Ascending aorta (tissue), 2 donors: ENCODE measurements at regions of chr22 and their contacts with region 1.

Region 1: DNA sequence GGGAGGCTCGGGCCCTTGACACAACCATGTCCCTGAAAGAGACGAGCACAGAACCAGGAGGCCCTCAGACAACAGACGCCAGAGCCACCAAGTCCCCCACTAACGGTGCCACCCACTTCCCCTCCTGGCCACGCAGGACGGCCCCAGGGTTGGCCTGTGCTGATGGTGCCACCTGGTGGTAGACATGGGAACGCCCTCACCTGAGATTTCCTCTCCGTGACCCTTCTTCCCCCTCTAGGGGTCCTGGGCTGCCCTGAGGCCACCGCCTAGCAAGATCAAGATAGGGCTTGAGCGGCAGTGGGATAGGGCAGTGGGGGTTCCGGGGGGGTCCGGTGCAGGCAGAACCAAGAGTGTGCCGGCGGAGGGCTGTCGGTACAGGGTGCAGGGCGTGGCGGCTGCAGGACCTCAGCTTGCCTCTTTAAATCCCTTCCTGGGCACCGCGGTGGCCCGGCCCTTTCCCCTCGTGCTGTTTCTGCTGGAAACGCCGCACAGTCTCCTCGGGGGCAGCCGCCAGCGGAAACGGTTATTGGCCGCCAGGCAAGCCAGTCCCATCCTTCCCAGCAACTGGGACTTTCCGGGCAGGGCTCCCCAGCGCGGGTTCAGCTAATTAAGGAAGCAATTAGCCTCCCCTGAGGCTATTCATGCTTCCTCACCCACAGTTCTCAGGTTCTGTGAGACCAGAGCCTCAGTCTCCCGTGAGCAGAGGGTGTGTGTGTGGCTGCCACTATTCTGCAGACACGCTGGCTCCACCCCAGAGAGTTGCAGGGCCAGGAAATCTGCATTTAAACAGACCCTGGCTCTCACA is 5.5 kb upstream of the NFAM1 start:
- DNase-seq: peak in 1 of 2 donors; percentile 86
- H3K4me3 ChIP-seq: peak overlapping the region; percentile 43 to 52
- H3K27ac ChIP-seq: no peak overlapping the region
- H3K4me1 ChIP-seq: peaks cover 0 to 11% of the 10 kb centered on the region in 2 donors
- H3K27me3 ChIP-seq: no peaks in the 10 kb centered on the region
- CTCF ChIP-seq: peak; percentile 96 to 98 (median 96)

Region 2: DNA sequence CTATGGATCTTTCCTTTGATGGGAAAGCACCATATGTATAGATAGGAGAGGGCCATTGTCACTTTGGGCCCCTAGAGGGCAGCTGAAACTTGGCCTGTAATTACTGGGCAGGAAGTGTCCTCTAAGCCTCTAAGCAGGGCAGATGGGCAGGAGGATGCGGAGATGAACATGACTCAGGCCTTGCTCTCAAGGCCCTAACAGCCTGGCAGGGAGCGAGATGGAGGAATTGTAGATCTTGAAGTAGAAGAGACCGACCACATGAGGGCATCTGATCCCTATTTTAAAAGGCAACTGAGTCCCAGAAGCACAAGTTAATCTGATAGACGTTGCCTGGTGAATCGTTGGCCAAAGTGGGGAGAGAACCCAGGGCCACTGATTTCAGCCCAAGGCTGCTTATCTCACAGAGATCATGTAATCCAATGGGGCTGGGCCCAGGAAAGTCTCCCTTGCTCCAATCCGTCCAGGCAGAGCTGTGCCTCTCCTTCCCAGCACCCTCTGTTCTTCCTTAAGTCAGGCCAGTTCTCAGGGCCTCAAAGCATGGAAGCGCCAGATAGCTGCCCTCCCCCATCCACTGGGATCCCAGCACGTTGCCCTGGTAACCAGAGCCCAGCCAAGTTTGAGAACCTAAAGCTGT is 471.0 kb before region 1 on chr22:
- intact Hi-C with region 1: loop called (anchors 5 kb)
- DNase-seq: no peak
- H3K4me3 ChIP-seq: no peak overlapping the region
- H3K27ac ChIP-seq: no peak overlapping the region
- H3K4me1 ChIP-seq: no peaks in the 10 kb centered on the region
- H3K27me3 ChIP-seq: no peaks in the 10 kb centered on the region
- CTCF ChIP-seq: peak in 1 of 3 experiments; percentile 30

Region 3: DNA sequence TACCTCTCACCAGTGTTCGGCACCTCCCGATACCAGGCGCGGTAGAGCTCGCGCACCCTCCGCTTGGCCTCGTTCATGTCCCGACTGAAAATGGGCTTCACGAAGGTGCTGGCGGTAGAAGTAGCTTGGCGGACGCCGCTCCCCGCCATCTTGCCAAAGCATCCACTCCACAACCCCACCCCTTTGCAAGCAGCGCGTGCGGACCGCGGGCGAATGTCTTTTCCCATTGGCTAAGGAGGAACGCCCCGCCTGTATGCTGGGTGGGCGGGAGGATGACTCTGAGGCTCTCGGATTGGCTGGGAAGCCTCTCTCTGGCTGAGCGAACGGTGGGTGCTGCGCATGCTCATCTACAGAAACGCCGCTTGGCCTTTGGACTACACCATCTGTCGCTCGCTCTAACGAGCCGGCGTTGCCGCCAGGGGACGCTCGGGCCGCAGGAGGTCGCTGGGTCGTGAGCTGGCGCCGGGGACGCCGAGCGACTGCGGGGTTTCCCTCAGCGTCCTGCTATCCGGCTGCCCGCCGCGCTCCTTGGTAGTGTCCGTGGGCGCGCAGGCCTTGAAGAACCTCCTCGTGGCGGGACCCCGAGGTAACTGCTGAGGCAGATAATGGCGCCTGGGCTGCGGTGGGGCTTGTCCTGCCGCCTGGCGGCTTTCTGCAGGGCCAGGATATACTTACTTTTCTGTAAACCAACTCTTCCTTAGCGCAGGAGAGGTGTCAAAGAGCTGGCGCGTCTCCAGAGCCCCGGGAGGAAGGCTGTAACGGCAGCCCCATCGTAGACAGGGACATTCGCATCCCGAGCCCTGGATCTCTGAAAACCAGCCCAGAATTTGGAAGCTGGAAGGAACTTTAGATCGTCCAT is 346.9 kb before region 1 on chr22 and contains the start of gene NDUFA6:
- intact Hi-C with region 1: loop called (anchors 1 kb)
- DNase-seq: peak; percentile 98 to 99
- H3K4me3 ChIP-seq: peak within 1 kb of the TSS; percentile 79 to 91
- H3K27ac ChIP-seq: peak within 1 kb of the TSS; percentile 93 to 97
- H3K4me1 ChIP-seq: peaks cover 5 to 16% of the 10 kb centered on the region in 2 donors
- H3K27me3 ChIP-seq: no peaks in the 10 kb centered on the region
- CTCF ChIP-seq: peak; percentile 90 to 98 (median 95)
- total RNA-seq, gene NDUFA6: 23.9 TPM

Region 4: DNA sequence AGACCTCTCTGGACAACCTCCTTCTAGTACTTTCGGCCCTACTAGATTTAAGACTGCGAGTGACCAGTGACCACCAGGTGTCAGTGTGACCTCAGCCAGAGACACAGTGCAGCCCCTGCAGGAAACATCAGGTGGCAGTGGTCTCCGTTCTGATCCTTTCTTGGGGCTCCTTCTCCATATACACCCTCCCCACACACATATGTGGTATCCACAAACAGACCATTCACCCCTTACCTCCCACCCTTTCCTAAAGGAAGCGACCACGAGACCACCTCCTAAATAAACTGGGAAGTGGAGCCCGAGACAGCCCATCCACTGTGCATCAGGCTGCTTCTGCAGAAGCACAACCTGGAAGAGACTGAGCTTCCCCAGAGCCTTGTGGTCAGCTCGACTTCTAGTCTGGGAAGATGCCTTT is 268.6 kb before region 1 on chr22:
- intact Hi-C with region 1: loop called (anchors 1 kb)
- DNase-seq: no peak
- H3K4me3 ChIP-seq: no peak overlapping the region
- H3K27ac ChIP-seq: no peak overlapping the region
- H3K4me1 ChIP-seq: peaks cover 0 to 3% of the 10 kb centered on the region in 2 donors
- H3K27me3 ChIP-seq: no peaks in the 10 kb centered on the region
- CTCF ChIP-seq: peak; percentile 61 to 85 (median 77)

Region 5: GRCh38 chr22:42270512-42271417 is 166.9 kb before region 1 on chr22 and contains the start of gene TCF20:
- intact Hi-C with region 1: loop called (anchors 2 kb)
- DNase-seq: peak in 1 of 2 donors; percentile 85
- H3K4me3 ChIP-seq: peak within 1 kb of the TSS; percentile 96 to 99
- H3K27ac ChIP-seq: peak within 1 kb of the TSS; percentile 77 to 88
- H3K4me1 ChIP-seq: peaks cover 0 to 9% of the 10 kb centered on the region in 2 donors
- H3K27me3 ChIP-seq: no peaks in the 10 kb centered on the region
- CTCF ChIP-seq: no peak
- total RNA-seq, gene TCF20: 11.9 TPM

Region 6: GRCh38 chr22:42369245-42370041 is 68.2 kb before region 1 on chr22:
- intact Hi-C with region 1: loop called (anchors 5 kb)
- DNase-seq: peak; percentile 85 to 94
- H3K4me3 ChIP-seq: peak overlapping the region; percentile 65 to 66
- H3K27ac ChIP-seq: no peak overlapping the region
- H3K4me1 ChIP-seq: peaks cover 20 to 37% of the 10 kb centered on the region in 2 donors
- H3K27me3 ChIP-seq: no peaks in the 10 kb centered on the region
- CTCF ChIP-seq: no peak